ENCODE measurements at regions of chr2 and their contacts with region 1.

Region 1: DNA sequence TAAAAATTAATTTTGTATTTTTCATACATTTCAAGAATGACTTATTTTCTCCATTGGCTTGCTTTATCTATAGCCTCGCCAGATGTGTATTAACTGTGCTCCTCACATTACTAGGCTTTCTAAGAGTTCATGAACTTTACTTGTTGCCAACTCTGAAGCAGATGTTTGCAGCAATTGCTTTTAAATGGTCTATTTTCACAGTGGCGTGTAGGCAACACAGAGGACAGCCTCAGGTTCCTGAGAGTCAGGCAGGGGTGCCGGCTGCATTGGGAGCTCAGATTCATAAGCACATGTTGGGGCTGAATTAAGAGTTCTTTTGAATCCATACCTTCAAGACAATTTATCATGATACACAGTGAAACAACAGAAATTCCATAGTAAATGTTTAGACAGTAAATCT is 179.2 kb upstream of the PXDN start:
- DNase-seq: no peak
- ATAC-seq: no peak

Region 2: GRCh38 chr2:2229626-2230432 is 306.3 kb after region 1 on chr2:
- intact Hi-C with region 1: loop called (anchors 10 kb)
- DNase-seq: no peak
- ATAC-seq: peak; percentile 15

Measured in Right ventricle myocardium inferior (tissue), 1 donor.